AG04449 (cell line): ENCODE measurements at regions of chr16 and their contacts with region 1.

Region 1: DNA sequence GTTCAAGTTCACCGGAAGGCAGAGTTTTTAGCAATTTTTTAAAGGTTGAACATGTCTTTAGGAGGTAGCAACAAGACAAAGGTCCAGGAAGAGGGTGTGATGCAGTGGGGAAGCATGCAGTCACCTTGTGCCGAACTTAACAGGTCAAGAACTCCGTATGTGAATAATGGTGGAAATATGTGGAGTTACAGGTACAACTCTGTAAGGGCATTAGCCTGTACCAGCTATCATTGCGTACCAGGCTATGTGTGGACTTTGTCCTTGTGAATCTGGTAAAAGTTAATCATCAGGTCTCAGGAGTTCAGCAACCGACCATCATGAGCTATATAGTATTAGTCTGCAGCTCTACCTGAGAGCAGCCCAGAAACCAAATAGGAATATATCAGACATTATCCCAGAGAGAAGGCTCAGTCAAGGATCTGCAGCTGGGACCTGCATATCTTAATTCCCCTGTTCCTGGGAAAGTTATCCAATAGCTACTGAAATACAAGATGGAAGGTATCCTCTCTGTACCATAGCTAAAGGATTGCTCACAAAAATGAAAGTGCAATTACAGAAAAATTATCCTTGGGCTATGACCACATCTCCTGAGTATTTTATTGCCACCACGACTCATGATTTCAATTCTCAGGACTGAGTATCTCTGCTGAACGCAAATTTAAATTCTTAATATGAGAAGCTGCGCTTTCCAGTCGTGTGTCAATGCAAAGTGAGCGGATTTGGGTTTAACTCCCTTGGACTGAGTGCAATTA is 469.3 kb downstream of the CDH13 start:
- DNase-seq: no peak
- H3K4me3 ChIP-seq: no peak overlapping the region
- CTCF ChIP-seq: no peak

Region 2: GRCh38 chr16:83113317-83113716 is 17.2 kb after region 1 on chr16:
- CTCF ChIA-PET with region 1: interaction called, 10 read pairs
- POLR2A ChIA-PET with region 1: no interaction called
- DNase-seq: no peak
- H3K4me3 ChIP-seq: no peak overlapping the region
- CTCF ChIP-seq: peak; percentile 56

Region 3: DNA sequence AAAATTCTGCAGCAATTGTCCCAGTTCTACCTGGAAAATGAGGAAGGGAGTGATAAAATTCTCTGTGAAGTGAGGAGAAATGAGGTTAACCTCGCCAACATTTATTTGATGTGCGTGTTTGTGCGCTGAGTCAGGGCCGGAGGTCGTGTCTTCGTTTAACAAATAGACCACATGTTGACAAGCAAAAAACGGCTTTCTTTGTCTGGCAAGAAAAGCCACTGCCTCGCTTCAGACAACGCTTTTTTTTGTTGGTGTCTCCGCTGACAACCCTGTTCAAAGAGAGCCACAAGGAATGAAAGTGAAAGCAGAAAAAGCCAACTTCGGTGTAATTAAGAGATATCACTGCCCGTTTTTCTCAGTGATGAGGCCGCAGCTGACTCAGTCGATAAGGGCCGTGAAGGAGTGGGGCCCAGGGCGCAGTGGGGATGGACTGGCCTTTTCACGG is 41.2 kb after region 1 on chr16:
- CTCF ChIA-PET with region 1: no interaction called
- POLR2A ChIA-PET with region 1: no interaction called
- DNase-seq: no peak
- H3K4me3 ChIP-seq: peak overlapping the region; percentile 52
- CTCF ChIP-seq: no peak